ENCODE measurements at regions of chr18 and their contacts with region 1.

Region 1: GRCh38 chr18:8704361-8705279 is 736 bp upstream of the MTCL1 start:
- DNase-seq: peak; percentile 91
- H3K4me3 ChIP-seq: peak overlapping the region; percentile 67
- H3K27ac ChIP-seq: no peak overlapping the region
- H3K4me1 ChIP-seq: peaks cover 24% of the 10 kb centered on the region
- CTCF ChIP-seq: no peak

Region 2: GRCh38 chr18:8608795-8609658 is 95.6 kb before region 1 on chr18 and contains the start of gene RAB12:
- CTCF ChIA-PET with region 1: no interaction called
- POLR2A ChIA-PET with region 1: no interaction called
- intact Hi-C with region 1: no loop called
- DNase-seq: peak; percentile 91
- H3K4me3 ChIP-seq: peak within 1 kb of the TSS; percentile 89
- H3K27ac ChIP-seq: peak within 1 kb of the TSS; percentile 76
- H3K4me1 ChIP-seq: peaks cover 59% of the 10 kb centered on the region
- CTCF ChIP-seq: peak; percentile 59
- total RNA-seq, gene RAB12: 28.8 and 34.0 TPM in 2 replicates

Region 3: DNA sequence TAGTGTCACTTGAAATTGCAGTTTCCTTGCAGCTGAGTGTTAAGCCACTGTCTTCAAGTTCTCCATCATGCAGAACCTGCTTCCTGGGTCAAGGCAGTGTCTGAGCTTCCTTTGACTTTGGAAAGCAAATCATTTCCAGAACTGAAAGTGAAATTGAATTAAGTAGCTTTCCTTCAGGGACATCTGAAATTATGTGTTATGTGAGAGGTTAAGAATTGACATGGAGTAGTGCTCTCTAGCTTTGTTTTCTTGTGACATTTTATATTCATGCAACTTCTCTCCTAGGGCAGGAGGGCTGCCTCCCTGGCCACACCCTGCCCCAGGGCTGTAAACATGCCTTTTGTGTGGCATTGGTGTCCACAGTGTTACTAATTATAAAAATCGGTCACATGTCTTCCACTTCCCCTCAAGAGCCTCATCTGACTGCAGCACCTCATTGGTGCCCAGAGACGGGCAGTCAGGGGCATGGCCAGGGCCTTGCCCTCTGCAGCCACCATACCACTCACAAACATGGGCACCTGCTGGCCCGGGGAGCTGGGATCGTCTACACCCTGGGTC is 81.0 kb before region 1 on chr18:
- CTCF ChIA-PET with region 1: no interaction called
- POLR2A ChIA-PET with region 1: no interaction called
- intact Hi-C with region 1: no loop called
- DNase-seq: no peak
- H3K4me3 ChIP-seq: no peak overlapping the region
- H3K27ac ChIP-seq: no peak overlapping the region
- H3K4me1 ChIP-seq: peaks cover 9% of the 10 kb centered on the region
- CTCF ChIP-seq: no peak

Region 4: GRCh38 chr18:8721094-8721669 is 16.6 kb after region 1 on chr18:
- CTCF ChIA-PET with region 1: no interaction called
- POLR2A ChIA-PET with region 1: interaction called, 15 read pairs
- intact Hi-C with region 1: loop called (anchors 2 kb)
- DNase-seq: no peak
- H3K4me3 ChIP-seq: no peak overlapping the region
- H3K27ac ChIP-seq: no peak overlapping the region
- H3K4me1 ChIP-seq: peaks cover 27% of the 10 kb centered on the region
- CTCF ChIP-seq: no peak

Region 5: GRCh38 chr18:8730080-8730827 is 25.6 kb after region 1 on chr18:
- CTCF ChIA-PET with region 1: no interaction called
- POLR2A ChIA-PET with region 1: interaction called, 30 read pairs
- intact Hi-C with region 1: loop called (anchors 2 kb)
- DNase-seq: no peak
- H3K4me3 ChIP-seq: no peak overlapping the region
- H3K27ac ChIP-seq: no peak overlapping the region
- H3K4me1 ChIP-seq: peaks cover 41% of the 10 kb centered on the region
- CTCF ChIP-seq: no peak

Region 6: DNA sequence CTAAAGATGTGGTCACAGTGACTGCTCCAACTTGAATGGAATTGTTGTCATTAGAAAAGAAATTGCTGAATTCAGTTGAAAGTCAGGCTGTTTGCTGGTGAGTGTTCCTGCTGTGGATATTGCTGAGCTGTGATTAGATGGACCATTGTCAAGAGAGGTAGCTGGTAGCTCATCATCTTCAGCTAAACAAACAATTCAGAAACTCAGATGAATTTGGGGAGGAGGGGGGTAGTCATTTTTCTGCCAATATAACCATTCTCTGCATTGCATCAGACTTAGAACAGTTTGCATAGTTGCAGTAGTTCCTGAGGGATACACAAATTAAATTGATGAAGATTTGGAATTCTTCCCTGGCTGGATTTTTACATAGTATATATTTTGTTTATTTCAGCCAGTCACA is 109.0 kb after region 1 on chr18:
- CTCF ChIA-PET with region 1: no interaction called
- POLR2A ChIA-PET with region 1: no interaction called
- intact Hi-C with region 1: no loop called
- DNase-seq: no peak
- H3K4me3 ChIP-seq: no peak overlapping the region
- H3K27ac ChIP-seq: no peak overlapping the region
- H3K4me1 ChIP-seq: no peaks in the 10 kb centered on the region
- CTCF ChIP-seq: no peak